Prostate gland (tissue), 2 donors: ENCODE measurements at regions of chr10 and their contacts with region 1.

Region 1: GRCh38 chr10:80382989-80383388 is 25.4 kb upstream of the PRXL2A start:
- DNase-seq: peak; percentile 21
- H3K4me3 ChIP-seq: no peak overlapping the region
- H3K27ac ChIP-seq: no peak overlapping the region
- H3K4me1 ChIP-seq: no peaks in the 10 kb centered on the region
- H3K27me3 ChIP-seq: no peaks in the 10 kb centered on the region
- CTCF ChIP-seq: peak in 3 of 4 experiments; percentile 65 to 69 (median 68)
- POLR2A ChIP-seq: no peak

Region 2: DNA sequence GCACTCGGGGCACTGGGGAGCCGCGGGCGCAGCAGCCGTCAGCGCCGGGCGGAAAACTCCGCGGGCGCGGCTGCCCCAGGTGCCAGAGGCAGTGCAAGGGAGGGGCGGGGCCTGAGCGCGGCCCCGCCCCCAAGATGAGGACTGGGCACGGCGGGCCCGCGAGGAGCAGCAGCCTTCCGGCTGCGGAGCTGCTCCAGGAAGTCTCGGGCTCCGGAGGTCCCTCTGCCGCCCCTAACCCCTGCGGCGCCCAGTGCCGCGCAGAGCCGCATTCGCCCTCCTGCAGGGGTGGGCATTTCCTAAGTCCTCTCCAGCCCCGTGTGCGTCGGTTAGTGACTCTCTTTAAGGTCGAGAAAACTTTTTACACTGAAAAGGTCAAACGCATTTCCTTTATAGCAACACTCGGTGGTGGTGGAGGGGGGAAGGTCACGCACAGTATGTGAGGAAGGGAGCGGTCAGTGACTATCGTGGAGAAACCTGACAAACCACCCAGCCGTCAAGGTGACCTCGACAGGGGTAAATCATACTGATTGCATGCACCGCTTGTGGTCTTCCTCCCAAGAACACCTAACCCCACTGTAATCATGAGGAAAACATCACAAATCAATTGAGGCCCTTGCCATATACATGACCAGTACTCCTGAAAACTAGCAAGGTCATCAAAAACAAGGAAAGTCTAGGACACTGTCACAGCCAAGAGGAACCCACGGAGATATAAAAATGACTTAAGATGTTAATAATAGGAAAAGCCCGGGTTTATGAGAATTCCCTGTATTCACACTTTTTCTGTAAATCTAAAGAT is 177.3 kb before region 1 on chr10 and contains the start of gene ANXA11:
- intact Hi-C with region 1: no loop called
- DNase-seq: peak; percentile 84
- H3K4me3 ChIP-seq: peak within 1 kb of the TSS; percentile 89 to 91
- H3K27ac ChIP-seq: peak within 1 kb of the TSS; percentile 95 to 97
- H3K4me1 ChIP-seq: peaks cover 9% of the 10 kb centered on the region
- H3K27me3 ChIP-seq: no peaks in the 10 kb centered on the region
- CTCF ChIP-seq: peak in 1 of 4 experiments; percentile 7
- POLR2A ChIP-seq: peak; percentile 98
- total RNA-seq, gene ANXA11: 158 to 174 TPM

Region 3: GRCh38 chr10:80444646-80445319 is 61.8 kb after region 1 on chr10:
- intact Hi-C with region 1: loop called (anchors 5 kb)
- DNase-seq: peak; percentile 56
- H3K4me3 ChIP-seq: no peak overlapping the region
- H3K27ac ChIP-seq: no peak overlapping the region
- H3K4me1 ChIP-seq: peaks cover 3% of the 10 kb centered on the region
- H3K27me3 ChIP-seq: no peaks in the 10 kb centered on the region
- CTCF ChIP-seq: peak; percentile 58 to 94 (median 88)
- POLR2A ChIP-seq: no peak

Region 4: DNA sequence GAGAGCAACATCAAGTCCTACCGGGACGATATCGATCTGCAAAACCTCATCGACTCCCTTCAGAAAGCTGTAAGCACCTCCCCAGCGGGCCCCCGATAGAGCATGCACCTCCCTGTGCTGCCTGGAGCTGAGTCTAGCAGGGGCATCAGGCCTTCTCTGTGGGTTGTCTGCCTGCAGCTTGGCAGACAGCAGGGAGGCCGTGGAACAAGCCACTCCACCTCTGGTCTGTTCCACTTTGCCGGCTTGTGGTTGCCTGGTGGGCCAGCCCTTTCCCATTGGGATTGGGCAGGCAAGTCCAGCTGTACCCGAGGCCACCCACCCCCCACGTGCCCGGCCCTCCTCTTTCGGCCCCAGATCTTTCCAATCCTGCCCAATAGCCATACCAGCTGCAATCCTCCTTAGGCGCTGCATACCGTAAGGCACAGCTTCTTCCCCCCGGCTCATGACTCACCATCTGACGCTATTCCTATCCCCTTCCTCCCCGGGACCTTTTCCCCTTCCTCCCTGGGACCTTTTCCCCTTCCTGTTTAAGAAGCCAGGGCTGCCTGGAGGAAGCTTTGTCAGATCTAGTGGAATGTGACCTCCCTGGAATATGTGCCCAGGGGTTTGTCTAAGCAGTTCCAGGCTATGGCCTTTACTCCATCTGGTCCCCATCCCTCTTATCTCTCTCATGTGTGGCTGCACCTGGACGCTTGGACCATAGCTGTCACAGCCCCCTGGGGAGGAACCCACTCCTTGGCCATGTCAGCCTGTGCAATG is 126.6 kb after region 1 on chr10:
- intact Hi-C with region 1: loop called (anchors 5 kb)
- DNase-seq: no peak
- H3K4me3 ChIP-seq: no peak overlapping the region
- H3K27ac ChIP-seq: peak overlapping the region in 1 of 2 donors; percentile 19
- H3K4me1 ChIP-seq: peaks cover 11% of the 10 kb centered on the region
- H3K27me3 ChIP-seq: no peaks in the 10 kb centered on the region
- CTCF ChIP-seq: no peak
- POLR2A ChIP-seq: no peak

Region 5: DNA sequence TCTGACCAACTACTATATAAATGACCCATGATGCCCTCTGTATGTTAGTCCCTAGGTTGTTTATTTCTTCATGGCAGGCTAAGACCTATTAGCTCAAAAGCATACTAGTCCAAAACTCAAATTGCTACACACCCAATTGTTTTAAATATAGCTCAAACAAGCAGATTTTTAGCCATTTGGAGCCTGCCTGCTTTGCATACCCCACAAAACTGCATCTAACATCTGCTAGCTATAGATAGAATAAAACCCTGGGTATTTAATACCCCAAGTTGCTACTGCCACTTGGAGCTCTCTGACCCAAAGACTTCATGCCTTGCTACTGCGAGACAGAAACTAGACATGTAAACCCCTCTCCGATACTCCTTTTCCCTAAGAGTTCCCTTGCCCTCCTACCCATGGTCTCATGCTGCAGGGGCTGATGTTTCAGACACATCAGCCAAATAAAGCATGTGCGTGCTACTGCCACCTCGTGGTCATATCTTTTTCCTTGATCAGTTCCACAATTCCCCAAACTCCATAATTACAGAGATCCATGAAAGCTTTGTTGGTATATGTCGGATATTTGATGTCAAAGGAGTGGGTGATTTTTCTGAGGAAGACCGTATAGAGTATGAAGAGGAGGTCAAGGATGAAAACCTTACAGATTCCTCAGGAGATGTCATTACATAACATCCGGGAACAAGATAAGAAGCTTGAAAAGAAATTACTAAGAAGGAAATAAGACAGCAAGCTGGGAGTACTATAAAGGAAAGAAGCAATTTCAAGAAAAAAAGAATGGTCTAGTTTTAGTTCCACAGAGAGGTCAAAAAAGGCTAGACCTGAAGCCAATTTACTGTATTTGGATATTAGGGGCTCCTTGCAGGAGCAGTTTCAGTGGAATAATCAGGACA is 541.3 kb after region 1 on chr10:
- intact Hi-C with region 1: loop called (anchors 10 kb)
- DNase-seq: peak; percentile 37
- H3K4me3 ChIP-seq: no peak overlapping the region
- H3K27ac ChIP-seq: no peak overlapping the region
- H3K4me1 ChIP-seq: no peaks in the 10 kb centered on the region
- H3K27me3 ChIP-seq: no peaks in the 10 kb centered on the region
- CTCF ChIP-seq: peak; percentile 10 to 59 (median 46)
- POLR2A ChIP-seq: no peak